ENCODE measurements at regions of chr20 and their contacts with region 1.

Region 1: DNA sequence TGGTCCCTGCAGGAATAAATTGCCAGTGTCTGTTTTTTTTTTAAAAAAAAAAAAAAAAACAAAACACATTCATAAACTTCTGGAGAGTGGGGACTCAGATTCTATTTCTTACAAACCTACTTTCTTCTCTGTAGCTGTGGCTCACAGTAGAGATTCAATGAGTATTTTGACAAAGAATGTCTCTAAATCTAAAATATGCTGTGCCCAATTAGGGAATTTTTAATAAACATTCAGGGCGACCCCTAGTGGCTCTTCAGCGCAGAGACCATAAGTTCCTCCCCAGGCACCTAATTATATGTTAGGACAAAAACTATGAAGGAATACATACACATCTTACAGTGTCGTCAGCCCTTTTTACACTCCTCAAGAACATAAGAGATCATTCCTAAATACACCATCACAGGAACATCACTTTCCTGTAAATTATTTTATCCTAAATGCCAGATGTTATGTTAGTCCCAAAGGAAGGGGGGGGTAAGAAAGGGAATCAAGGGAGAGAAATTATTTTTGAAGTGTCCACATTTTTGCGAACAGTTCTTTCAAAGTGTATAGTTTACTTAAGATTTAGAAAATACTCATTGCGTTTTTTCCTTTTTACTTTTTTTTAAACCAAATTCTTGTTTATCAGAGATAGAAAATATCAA is 21.8 kb upstream of the NAA20 start:
- DNase-seq: peak in 1 of 10 donors; percentile 55

Region 2: GRCh38 chr20:19692685-19693119 is 302.6 kb before region 1 on chr20:
- intact Hi-C with region 1: loop called (anchors 2 kb)
- DNase-seq: peak; percentile 30 to 92 (median 68)

Region 3: GRCh38 chr20:19784511-19785172 is 210.7 kb before region 1 on chr20:
- intact Hi-C with region 1: loop called (anchors 2 kb)
- DNase-seq: peak in 5 of 10 donors; percentile 44 to 88 (median 50)

Region 4: GRCh38 chr20:19889011-19889953 is 106.1 kb before region 1 on chr20:
- intact Hi-C with region 1: loop called (anchors 2 kb)
- DNase-seq: peak; percentile 21 to 93 (median 40)

Region 5: GRCh38 chr20:19974626-19975435 is 20.5 kb before region 1 on chr20:
- intact Hi-C with region 1: loop called (anchors 1 kb)
- DNase-seq: peak; percentile 68 to 94 (median 75)

Region 6: GRCh38 chr20:20229595-20229994 is 234.3 kb after region 1 on chr20:
- intact Hi-C with region 1: no loop called
- DNase-seq: no peak